CD4-positive, alpha-beta T cell (primary cell): ENCODE measurements at regions of chr22 and their contacts with region 1.

Region 1: GRCh38 chr22:30386960-30387827 is at the start of gene RNF215:
- DNase-seq: peak; percentile 44 to 91 (median 74)
- ATAC-seq: peak; percentile 82
- H3K4me3 ChIP-seq: peak within 1 kb of the TSS; percentile 45
- H3K4me3 Mint-ChIP-seq: peak within 1 kb of the TSS; percentile 87
- H3K27ac ChIP-seq: no peak within 1 kb of the TSS
- H3K27ac Mint-ChIP-seq: no peak within 1 kb of the TSS
- H3K4me1 ChIP-seq: peaks cover 19% of the 10 kb centered on the region
- H3K4me1 Mint-ChIP-seq: peaks cover 26% of the 10 kb centered on the region
- H3K27me3 ChIP-seq: no peaks in the 10 kb centered on the region
- H3K27me3 Mint-ChIP-seq: no peaks in the 10 kb centered on the region
- CTCF ChIP-seq: peak; percentile 69
- total RNA-seq, gene RNF215: 4.6 to 4.9 TPM

Region 2: DNA sequence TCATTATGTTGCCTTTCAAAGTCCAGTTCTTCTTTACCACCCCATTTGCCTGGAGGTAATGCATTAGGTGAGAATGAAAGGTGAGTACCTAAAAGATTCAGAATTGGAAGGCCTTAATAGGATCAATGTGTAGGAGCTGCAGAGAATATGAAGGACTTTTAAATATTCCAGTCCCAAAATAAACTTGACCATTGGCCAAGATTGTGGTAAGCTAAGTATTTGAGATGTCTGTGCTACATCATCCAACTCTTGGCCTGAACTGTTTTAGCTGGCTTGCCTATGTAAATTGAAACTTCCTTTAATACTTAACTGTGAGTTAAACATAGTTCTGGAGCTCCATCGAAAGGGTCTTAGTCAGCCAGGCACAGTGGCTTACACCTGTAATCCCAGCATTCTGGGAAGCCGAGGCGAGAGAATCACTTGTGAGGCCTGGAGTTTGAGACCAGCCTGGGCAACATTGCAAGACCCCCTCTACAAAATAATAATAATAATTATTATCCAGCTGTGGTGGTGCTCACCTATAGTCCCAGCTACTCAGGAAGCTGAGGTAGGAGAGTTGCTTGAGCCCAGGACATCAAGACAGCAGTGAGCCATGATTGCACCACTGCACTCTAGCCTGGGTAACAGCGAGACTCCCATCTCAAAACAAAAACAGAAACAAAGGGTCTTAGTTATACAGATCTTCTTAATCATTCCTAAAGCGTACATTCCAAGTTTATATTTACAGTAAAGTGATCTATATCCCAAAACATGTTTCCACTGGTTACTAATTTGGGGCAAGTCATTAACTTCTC is 474.4 kb before region 1 on chr22:
- CTCF ChIA-PET with region 1: no interaction called
- POLR2A ChIA-PET with region 1: no interaction called
- intact Hi-C with region 1: no loop called
- DNase-seq: no peak
- ATAC-seq: no peak
- H3K4me3 ChIP-seq: no peak overlapping the region
- H3K4me3 Mint-ChIP-seq: no peak overlapping the region
- H3K27ac ChIP-seq: no peak overlapping the region
- H3K27ac Mint-ChIP-seq: no peak overlapping the region
- H3K4me1 ChIP-seq: peaks cover 16% of the 10 kb centered on the region
- H3K4me1 Mint-ChIP-seq: peaks cover 83% of the 10 kb centered on the region
- H3K27me3 ChIP-seq: no peaks in the 10 kb centered on the region
- H3K27me3 Mint-ChIP-seq: no peaks in the 10 kb centered on the region
- CTCF ChIP-seq: no peak

Region 3: GRCh38 chr22:30104501-30105156 is 282.6 kb before region 1 on chr22:
- CTCF ChIA-PET with region 1: interaction called, 7 read pairs
- POLR2A ChIA-PET with region 1: no interaction called
- intact Hi-C with region 1: loop called (anchors 1 kb)
- DNase-seq: peak in 3 of 14 experiments; percentile 23 to 66 (median 35)
- ATAC-seq: peak; percentile 69
- H3K4me3 ChIP-seq: no peak overlapping the region
- H3K4me3 Mint-ChIP-seq: no peak overlapping the region
- H3K27ac ChIP-seq: no peak overlapping the region
- H3K27ac Mint-ChIP-seq: no peak overlapping the region
- H3K4me1 ChIP-seq: peaks cover 7% of the 10 kb centered on the region
- H3K4me1 Mint-ChIP-seq: peaks cover 35% of the 10 kb centered on the region
- H3K27me3 ChIP-seq: no peaks in the 10 kb centered on the region
- H3K27me3 Mint-ChIP-seq: no peaks in the 10 kb centered on the region
- CTCF ChIP-seq: no peak

Region 4: GRCh38 chr22:30275625-30276024 is 111.6 kb before region 1 on chr22:
- CTCF ChIA-PET with region 1: no interaction called
- POLR2A ChIA-PET with region 1: no interaction called
- intact Hi-C with region 1: no loop called
- DNase-seq: peak in 4 of 14 experiments; percentile 47 to 73 (median 68)
- ATAC-seq: peak; percentile 88
- H3K4me3 ChIP-seq: peak overlapping the region; percentile 22
- H3K4me3 Mint-ChIP-seq: peak overlapping the region; percentile 3
- H3K27ac ChIP-seq: no peak overlapping the region
- H3K27ac Mint-ChIP-seq: peak overlapping the region; percentile 25
- H3K4me1 ChIP-seq: peaks cover 34% of the 10 kb centered on the region
- H3K4me1 Mint-ChIP-seq: peaks cover 50% of the 10 kb centered on the region
- H3K27me3 ChIP-seq: no peaks in the 10 kb centered on the region
- H3K27me3 Mint-ChIP-seq: no peaks in the 10 kb centered on the region
- CTCF ChIP-seq: no peak

Region 5: GRCh38 chr22:30289134-30289979 is 97.8 kb before region 1 on chr22 and contains the start of gene CASTOR1:
- CTCF ChIA-PET with region 1: interaction called, 99 read pairs
- POLR2A ChIA-PET with region 1: interaction called, 83 read pairs
- intact Hi-C with region 1: loop called (anchors 1 kb)
- DNase-seq: peak; percentile 75 to 96 (median 86)
- ATAC-seq: peak; percentile 78
- H3K4me3 ChIP-seq: peak within 1 kb of the TSS; percentile 75
- H3K4me3 Mint-ChIP-seq: peak within 1 kb of the TSS; percentile 97
- H3K27ac ChIP-seq: peak within 1 kb of the TSS; percentile 51 to 60
- H3K27ac Mint-ChIP-seq: peak within 1 kb of the TSS; percentile 89
- H3K4me1 ChIP-seq: peaks cover 54% of the 10 kb centered on the region
- H3K4me1 Mint-ChIP-seq: peaks cover 55% of the 10 kb centered on the region
- H3K27me3 ChIP-seq: no peaks in the 10 kb centered on the region
- H3K27me3 Mint-ChIP-seq: no peaks in the 10 kb centered on the region
- CTCF ChIP-seq: no peak
- total RNA-seq, gene CASTOR1: 7.9 to 8.8 TPM

Region 6: GRCh38 chr22:30356449-30357235 is 30.6 kb before region 1 on chr22 and contains the starts of genes CCDC157 and SF3A1:
- CTCF ChIA-PET with region 1: interaction called, 7 read pairs
- POLR2A ChIA-PET with region 1: interaction called, 6 read pairs
- intact Hi-C with region 1: loop called (anchors 1 to 2 kb)
- DNase-seq: peak; percentile 70 to 95 (median 80)
- ATAC-seq: peak; percentile 85
- H3K4me3 ChIP-seq: peak within 1 kb of the TSS; percentile 90
- H3K4me3 Mint-ChIP-seq: peak within 1 kb of the TSS; percentile 100
- H3K27ac ChIP-seq: peak within 1 kb of the TSS; percentile 89 to 95
- H3K27ac Mint-ChIP-seq: peak within 1 kb of the TSS; percentile 99
- H3K4me1 ChIP-seq: peaks cover 51% of the 10 kb centered on the region
- H3K4me1 Mint-ChIP-seq: peaks cover 57% of the 10 kb centered on the region
- H3K27me3 ChIP-seq: no peaks in the 10 kb centered on the region
- H3K27me3 Mint-ChIP-seq: no peaks in the 10 kb centered on the region
- CTCF ChIP-seq: no peak
- total RNA-seq, gene CCDC157: 8.3 to 10.1 TPM
- total RNA-seq, gene SF3A1: 335 to 388 TPM

Region 7: DNA sequence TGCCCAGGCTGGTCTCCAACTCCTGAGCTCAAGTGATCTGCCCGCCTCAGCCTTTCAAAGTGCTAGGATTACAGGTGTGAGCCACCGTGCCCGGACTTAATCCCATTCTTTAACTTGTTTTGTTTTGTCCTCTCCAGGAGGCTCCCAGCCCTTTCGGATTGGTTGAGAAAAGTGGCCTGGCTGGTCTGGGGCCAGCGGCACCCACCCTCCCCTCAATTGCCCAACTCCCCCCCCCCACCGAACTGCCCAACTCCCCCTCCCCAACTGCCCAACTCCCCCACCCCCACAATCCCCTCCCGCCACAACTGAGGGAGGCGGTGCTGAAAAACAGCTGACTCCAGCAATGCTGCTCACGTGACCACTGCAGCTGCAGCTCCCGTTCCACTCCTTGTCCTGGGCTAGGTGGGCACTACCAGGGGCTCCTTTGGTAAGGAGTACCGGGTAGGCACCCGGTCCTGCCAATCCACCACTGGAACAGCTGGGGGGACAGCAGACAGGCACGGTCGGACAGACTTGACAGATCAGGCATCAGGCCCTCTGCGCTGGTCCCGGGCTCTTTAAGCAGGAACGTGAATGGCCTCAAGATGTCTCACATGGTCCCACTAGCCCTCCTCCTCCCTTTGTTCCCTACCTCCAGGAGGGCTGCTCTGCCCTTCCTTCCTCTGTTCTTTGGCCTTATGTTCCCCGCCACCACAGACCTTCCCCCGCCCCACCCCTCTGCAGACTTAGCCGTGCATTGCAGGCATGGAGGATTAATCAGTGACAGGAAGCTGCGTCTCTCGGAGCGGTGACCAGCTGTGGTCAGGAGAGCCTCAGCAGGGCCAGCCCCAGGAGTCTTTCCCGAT is 219.5 kb after region 1 on chr22 and contains the start of gene TCN2:
- CTCF ChIA-PET with region 1: no interaction called
- POLR2A ChIA-PET with region 1: no interaction called
- intact Hi-C with region 1: loop called in 1 of 2 experiments (anchors 10 kb)
- DNase-seq: peak in 9 of 14 experiments; percentile 10 to 69 (median 37)
- ATAC-seq: peak; percentile 69
- H3K4me3 ChIP-seq: peak within 1 kb of the TSS; percentile 61
- H3K4me3 Mint-ChIP-seq: peak within 1 kb of the TSS; percentile 92
- H3K27ac ChIP-seq: no peak within 1 kb of the TSS
- H3K27ac Mint-ChIP-seq: peak within 1 kb of the TSS; percentile 45
- H3K4me1 ChIP-seq: peaks cover 33% of the 10 kb centered on the region
- H3K4me1 Mint-ChIP-seq: peaks cover 16% of the 10 kb centered on the region
- H3K27me3 ChIP-seq: no peaks in the 10 kb centered on the region
- H3K27me3 Mint-ChIP-seq: no peaks in the 10 kb centered on the region
- CTCF ChIP-seq: no peak
- total RNA-seq, gene TCN2: 0.52 to 0.53 TPM

Region 8: GRCh38 chr22:30920407-30920806 is 533.2 kb after region 1 on chr22:
- CTCF ChIA-PET with region 1: no interaction called
- POLR2A ChIA-PET with region 1: no interaction called
- intact Hi-C with region 1: loop called in 1 of 2 experiments (anchors 5 kb)
- DNase-seq: peak; percentile 74 to 91 (median 82)
- ATAC-seq: peak; percentile 80
- H3K4me3 ChIP-seq: peak overlapping the region; percentile 1
- H3K4me3 Mint-ChIP-seq: peak overlapping the region; percentile 60
- H3K27ac ChIP-seq: no peak overlapping the region
- H3K27ac Mint-ChIP-seq: peak overlapping the region; percentile 25
- H3K4me1 ChIP-seq: peaks cover 23% of the 10 kb centered on the region
- H3K4me1 Mint-ChIP-seq: peaks cover 22% of the 10 kb centered on the region
- H3K27me3 ChIP-seq: no peaks in the 10 kb centered on the region
- H3K27me3 Mint-ChIP-seq: no peaks in the 10 kb centered on the region
- CTCF ChIP-seq: peak; percentile 99